ENCODE measurements at regions of chr3 and their contacts with region 1.

Region 1: GRCh38 chr3:38204599-38205471 is 39.5 kb downstream of the OXSR1 start:
- DNase-seq: no peak
- H3K4me3 ChIP-seq: no peak overlapping the region
- H3K27ac ChIP-seq: no peak overlapping the region
- H3K4me1 ChIP-seq: no peaks in the 10 kb centered on the region
- H3K27me3 ChIP-seq: no peaks in the 10 kb centered on the region
- CTCF ChIP-seq: no peak
- POLR2A ChIP-seq: no peak

Region 2: DNA sequence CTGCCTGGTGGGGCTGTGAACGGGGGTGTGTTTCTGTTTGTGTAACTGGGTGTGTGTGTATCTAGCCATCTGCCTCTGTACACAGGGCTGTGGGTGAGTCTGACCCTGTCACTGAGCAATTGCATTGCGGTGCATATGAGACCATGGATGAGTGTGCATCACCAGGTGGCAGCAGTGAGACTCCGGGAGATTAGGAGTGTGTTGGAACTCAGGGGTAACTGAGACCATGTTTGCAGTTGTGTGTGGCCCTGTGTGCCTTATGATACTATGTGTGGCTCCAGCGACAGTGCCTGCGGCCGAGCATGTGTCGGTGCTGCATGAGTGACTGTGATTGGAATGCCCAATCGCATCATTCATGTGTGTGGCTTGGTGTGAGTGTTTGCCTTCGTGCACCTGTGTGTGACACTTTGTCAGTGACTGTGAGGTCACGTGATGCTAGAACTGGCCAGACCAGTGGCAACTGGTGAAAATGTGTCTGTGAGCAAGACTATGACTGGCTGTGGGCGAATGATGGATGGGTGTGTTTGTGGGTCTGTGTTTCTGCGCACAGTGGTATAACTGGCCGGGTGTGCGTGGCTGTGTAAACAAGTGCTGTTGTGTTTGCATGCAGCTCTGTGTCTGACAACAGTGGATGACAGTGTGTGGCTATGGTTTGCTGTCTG is 200.3 kb before region 1 on chr3:
- intact Hi-C with region 1: no loop called
- DNase-seq: peak; percentile 84
- H3K4me3 ChIP-seq: peak overlapping the region in 1 of 3 donors; percentile 1
- H3K27ac ChIP-seq: peak overlapping the region; percentile 87
- H3K4me1 ChIP-seq: peaks cover 8 to 28% of the 10 kb centered on the region in 2 donors
- H3K27me3 ChIP-seq: no peaks in the 10 kb centered on the region
- CTCF ChIP-seq: peak; percentile 20 to 81 (median 63)
- POLR2A ChIP-seq: no peak

Region 3: GRCh38 chr3:38800511-38800910 is 595.7 kb after region 1 on chr3:
- intact Hi-C with region 1: loop called (anchors 5 kb)
- DNase-seq: no peak
- H3K4me3 ChIP-seq: no peak overlapping the region
- H3K27ac ChIP-seq: no peak overlapping the region
- H3K4me1 ChIP-seq: no peaks in the 10 kb centered on the region
- H3K27me3 ChIP-seq: peaks cover 0 to 4% of the 10 kb centered on the region in 2 donors
- CTCF ChIP-seq: no peak
- POLR2A ChIP-seq: no peak